ENCODE measurements at regions of chr3 and their contacts with region 1.

Region 1: DNA sequence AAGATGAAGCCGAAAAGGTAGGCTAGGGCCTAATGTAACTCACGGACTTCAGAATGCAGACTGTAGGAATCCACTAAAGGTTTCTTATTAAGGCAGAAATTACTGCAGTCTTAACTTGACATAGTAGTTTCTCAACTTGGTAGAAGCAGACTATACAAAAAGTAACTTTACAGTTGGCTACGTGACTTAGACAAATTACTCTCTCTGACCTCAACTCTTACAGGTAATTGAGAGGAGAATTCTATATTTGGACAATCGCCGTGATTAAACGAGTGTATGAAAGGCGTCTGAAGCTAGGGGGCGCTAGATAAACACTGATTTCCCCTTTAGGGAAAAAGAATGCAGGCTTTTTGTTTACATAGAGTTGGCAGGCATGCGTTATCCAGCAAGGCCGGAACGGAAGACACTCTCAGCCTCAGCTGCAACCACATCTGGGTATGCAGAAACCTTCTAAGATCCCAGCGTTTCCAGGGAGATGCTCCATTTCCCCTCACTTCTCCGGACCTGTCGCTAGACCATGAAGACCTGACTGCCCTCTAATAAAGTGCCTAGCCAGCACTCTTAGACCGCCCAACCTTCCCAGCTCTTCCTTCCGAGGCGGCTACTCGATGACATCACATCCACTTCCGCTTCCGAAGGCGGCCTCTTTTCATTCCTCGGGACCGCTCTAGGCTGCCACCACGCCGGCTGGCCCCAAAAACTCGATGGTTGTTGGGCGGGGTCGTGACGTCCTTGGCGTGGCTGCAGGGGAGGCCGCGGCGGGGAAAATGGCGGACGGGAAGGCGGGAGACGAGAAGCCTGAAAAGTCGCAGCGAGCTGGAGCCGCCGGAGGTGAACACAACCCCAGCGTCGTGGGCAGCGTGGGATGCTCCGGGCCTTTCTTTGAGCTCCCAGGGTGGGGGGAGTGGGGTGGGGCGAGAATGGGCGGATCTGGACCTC is at the start of gene PCNP:
- DNase-seq: peak; percentile 94
- H3K4me3 ChIP-seq: peak within 1 kb of the TSS; percentile 87
- CTCF ChIP-seq: peak; percentile 59

Region 2: GRCh38 chr3:101509811-101510210 is 63.9 kb before region 1 on chr3:
- CTCF ChIA-PET with region 1: interaction called, 14 read pairs
- POLR2A ChIA-PET with region 1: no interaction called
- DNase-seq: no peak
- H3K4me3 ChIP-seq: no peak overlapping the region
- CTCF ChIP-seq: no peak

Region 3: DNA sequence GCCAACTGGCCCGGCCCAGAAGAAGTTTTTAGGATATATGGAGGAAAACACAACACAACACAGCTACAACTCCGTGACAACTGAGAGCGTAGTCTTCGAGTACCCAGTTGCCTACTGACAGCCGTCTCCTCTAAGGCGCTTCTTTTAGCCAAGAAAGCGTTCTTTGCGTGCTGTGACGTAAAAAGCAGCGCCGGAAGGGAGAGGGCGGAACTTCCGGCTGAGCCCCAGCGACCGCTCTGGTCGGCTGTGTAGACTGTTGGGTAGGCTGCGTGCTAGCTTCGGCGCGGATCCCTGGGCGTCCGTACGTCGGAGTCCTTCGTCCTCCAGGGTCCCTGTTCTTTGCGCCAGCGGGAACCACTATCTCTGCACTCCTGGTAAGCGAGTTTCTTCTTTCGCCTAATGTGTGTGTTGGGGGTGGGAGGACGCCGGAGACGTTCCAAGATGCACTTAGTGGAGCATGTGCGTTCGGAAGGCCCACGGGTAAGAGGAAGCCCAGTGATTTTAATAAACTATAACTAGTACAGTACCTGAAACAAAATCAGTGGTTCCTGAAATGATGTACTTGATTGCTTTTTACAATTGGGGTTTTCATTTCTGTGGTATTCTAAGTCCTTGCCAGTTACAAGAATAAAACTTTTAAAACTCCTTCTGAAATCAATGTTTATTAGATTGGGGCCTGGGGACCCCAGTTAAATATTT is 11.9 kb before region 1 on chr3 and contains the start of gene TRMT10C:
- CTCF ChIA-PET with region 1: interaction called, 41 read pairs
- POLR2A ChIA-PET with region 1: interaction called, 12 read pairs
- DNase-seq: no peak
- H3K4me3 ChIP-seq: peak within 1 kb of the TSS; percentile 93
- CTCF ChIP-seq: no peak

Region 4: GRCh38 chr3:101588616-101589015 is 14.9 kb after region 1 on chr3:
- CTCF ChIA-PET with region 1: interaction called, 18 read pairs
- POLR2A ChIA-PET with region 1: no interaction called
- DNase-seq: no peak
- H3K4me3 ChIP-seq: no peak overlapping the region
- CTCF ChIP-seq: no peak

Region 5: DNA sequence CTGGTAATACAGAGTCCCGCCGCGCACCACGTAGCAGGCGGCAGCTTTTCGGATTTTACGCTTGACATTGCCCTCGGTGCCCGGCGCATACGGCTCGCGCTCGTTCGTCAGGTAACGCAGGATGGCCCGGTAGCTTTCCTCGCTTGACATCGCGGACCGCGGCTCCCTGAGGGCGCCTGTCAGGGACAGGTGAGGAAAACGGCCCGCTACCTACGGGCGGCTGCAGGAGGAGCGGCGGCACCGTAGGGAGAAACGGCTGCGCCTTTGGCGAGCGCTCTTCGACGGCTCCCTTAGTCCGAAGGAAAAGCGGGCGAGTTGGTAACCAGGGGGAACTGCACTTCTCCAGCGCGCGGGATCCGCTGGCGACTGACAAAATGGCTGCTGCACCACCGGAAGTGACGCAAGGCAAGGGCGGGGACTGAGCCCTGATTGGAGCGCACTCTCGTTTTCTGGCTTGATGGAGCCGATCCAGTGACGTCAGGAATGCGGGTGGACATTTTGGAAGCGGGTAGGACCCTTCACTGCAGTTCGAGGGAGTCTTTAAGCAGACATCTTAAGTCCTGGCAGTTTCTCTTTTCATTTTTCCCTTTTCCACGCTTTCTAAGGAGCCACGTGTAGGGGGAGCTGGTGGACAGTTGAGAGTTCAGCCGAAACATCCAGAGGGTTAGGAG is 103.2 kb after region 1 on chr3 and contains the start of gene ZBTB11:
- CTCF ChIA-PET with region 1: interaction called, 17 read pairs
- POLR2A ChIA-PET with region 1: interaction called, 6 read pairs
- DNase-seq: peak; percentile 98
- H3K4me3 ChIP-seq: peak within 1 kb of the TSS; percentile 99
- CTCF ChIP-seq: peak; percentile 67

Region 6: GRCh38 chr3:101709126-101709525 is 135.4 kb after region 1 on chr3:
- CTCF ChIA-PET with region 1: interaction called, 13 read pairs
- POLR2A ChIA-PET with region 1: no interaction called
- DNase-seq: no peak
- H3K4me3 ChIP-seq: no peak overlapping the region
- CTCF ChIP-seq: no peak

Region 7: GRCh38 chr3:101827211-101828174 is 253.8 kb after region 1 on chr3:
- CTCF ChIA-PET with region 1: no interaction called
- POLR2A ChIA-PET with region 1: no interaction called
- DNase-seq: no peak
- H3K4me3 ChIP-seq: peak overlapping the region; percentile 61
- CTCF ChIP-seq: no peak